GM10248 (cell line): ENCODE measurements at regions of chr20 and their contacts with region 1.

Region 1: DNA sequence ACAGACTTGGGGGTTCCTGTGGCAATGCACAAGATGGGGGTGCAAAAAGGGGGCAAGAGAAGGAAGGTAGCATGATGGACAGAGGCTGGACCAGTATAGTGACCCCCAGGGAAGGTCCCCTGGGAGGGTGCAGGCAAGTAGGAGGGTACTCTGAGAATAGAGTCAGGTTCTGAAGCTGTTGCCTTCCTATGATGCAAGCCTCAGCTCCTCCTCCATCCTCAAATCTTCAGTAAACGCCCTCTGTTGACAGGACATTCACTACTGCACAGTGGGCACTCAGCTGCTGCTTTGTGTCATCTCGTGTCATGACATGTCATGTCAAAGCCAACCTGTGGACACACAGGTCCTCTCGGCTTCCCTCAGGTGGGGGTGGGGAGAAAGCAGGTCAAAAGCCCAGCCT is 5.8 kb upstream of the SDCBP2 start:
- DNase-seq: no peak
- CTCF ChIP-seq: no peak

Region 2: DNA sequence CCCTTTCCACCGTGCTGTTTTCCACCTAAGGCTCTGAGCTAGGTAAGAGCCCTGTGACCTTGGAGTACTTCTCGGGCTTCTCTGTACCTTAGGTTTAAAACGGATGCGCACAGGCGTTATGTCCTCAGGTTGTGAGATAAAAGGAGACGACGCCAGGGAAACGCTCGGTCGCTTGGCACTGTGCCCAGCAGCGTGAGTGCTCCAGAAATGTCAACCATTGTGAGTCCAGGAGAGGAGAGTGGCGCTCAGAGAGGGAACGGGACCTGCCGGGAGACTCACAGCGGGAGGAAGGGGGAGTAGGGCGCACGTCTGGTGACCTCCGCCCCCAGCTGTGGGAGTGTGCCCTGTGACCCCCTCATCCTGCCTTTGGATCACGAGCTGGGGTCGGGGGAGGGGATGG is 625.3 kb before region 1 on chr20:
- CTCF ChIA-PET with region 1: no interaction called
- POLR2A ChIA-PET with region 1: no interaction called
- DNase-seq: no peak
- CTCF ChIP-seq: no peak

Region 3: GRCh38 chr20:1345030-1345755 is 10.4 kb after region 1 on chr20:
- CTCF ChIA-PET with region 1: interaction called, 13 read pairs
- POLR2A ChIA-PET with region 1: no interaction called
- DNase-seq: no peak
- CTCF ChIP-seq: no peak